MCF 10A (cell line): ENCODE measurements at regions of chr5 and their contacts with region 1.

Region 1: DNA sequence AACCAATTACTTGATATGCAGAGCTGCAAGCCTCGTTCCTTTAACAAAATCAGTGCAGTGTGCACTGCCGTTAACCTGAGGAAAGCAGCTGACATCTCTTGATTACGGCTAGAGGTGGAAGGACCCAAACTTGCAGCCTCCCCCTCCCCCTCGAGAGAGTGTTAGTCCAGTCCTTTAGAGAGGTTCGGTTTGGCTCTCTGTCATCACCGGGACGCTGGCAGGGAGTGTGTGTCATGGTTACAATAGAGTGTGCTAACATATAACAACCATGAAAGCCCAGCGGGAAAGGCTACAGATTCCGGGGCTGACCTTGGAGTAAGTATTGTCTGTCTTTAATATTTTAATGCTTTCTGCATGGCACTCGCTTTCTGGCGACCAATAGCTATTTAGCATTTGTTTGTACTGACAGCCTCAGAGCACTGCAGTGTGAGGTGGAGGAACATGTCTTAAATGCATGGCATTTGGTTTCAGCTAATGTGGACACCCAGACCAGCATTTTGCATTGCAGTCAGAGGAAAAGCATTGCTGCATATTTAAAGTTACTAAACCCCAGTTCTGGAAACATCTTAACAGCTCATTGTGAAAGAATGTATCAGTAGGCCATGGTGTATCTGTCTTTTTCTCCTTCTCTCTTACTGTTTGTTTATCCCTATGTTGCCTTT is 237.5 kb downstream of the CD180 start:
- DNase-seq: peak; percentile 60
- H3K4me3 Mint-ChIP-seq: peak overlapping the region; percentile 74
- H3K27ac Mint-ChIP-seq: peak overlapping the region; percentile 90
- H3K4me1 Mint-ChIP-seq: peaks cover 34% of the 10 kb centered on the region
- H3K27me3 Mint-ChIP-seq: no peaks in the 10 kb centered on the region
- CTCF ChIP-seq: no peak

Region 2: GRCh38 chr5:66882592-66883227 is 76.4 kb before region 1 on chr5:
- CTCF ChIA-PET with region 1: interaction called, 6 read pairs
- POLR2A ChIA-PET with region 1: interaction called, 11 read pairs
- intact Hi-C with region 1: no loop called
- DNase-seq: peak; percentile 88
- H3K4me3 Mint-ChIP-seq: peak overlapping the region; percentile 9
- H3K27ac Mint-ChIP-seq: peak overlapping the region; percentile 60
- H3K4me1 Mint-ChIP-seq: peaks cover 28% of the 10 kb centered on the region
- H3K27me3 Mint-ChIP-seq: no peaks in the 10 kb centered on the region
- CTCF ChIP-seq: no peak

Region 3: GRCh38 chr5:66891183-66891925 is 67.8 kb before region 1 on chr5:
- CTCF ChIA-PET with region 1: no interaction called
- POLR2A ChIA-PET with region 1: interaction called, 22 read pairs
- intact Hi-C with region 1: no loop called
- DNase-seq: peak; percentile 95
- H3K4me3 Mint-ChIP-seq: peak overlapping the region; percentile 32
- H3K27ac Mint-ChIP-seq: peak overlapping the region; percentile 100
- H3K4me1 Mint-ChIP-seq: peaks cover 42% of the 10 kb centered on the region
- H3K27me3 Mint-ChIP-seq: no peaks in the 10 kb centered on the region
- CTCF ChIP-seq: no peak

Region 4: DNA sequence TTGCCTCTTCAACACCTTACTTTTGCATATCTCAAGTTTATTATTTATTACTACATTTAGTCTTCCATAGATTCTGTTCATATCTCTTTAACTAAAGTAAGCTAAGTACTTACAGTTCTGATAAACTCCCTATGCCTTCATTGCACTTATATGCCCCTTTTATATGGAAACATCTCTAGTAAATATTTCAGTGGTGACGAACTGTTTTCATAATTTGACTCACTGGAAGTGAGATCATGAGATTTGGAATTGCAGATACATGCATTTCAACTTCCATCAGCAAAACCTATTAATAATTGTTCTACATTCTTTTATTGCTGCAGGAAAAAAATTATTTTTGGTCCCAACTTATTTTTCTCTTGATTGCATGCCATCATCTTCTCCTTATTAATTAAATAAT is 26.0 kb before region 1 on chr5:
- CTCF ChIA-PET with region 1: no interaction called
- POLR2A ChIA-PET with region 1: interaction called, 18 read pairs
- intact Hi-C with region 1: no loop called
- DNase-seq: peak; percentile 8
- H3K4me3 Mint-ChIP-seq: no peak overlapping the region
- H3K27ac Mint-ChIP-seq: no peak overlapping the region
- H3K4me1 Mint-ChIP-seq: peaks cover 10% of the 10 kb centered on the region
- H3K27me3 Mint-ChIP-seq: no peaks in the 10 kb centered on the region
- CTCF ChIP-seq: no peak

Region 5: GRCh38 chr5:66945389-66946349 is 13.4 kb before region 1 on chr5:
- CTCF ChIA-PET with region 1: no interaction called
- POLR2A ChIA-PET with region 1: interaction called, 29 read pairs
- intact Hi-C with region 1: no loop called
- DNase-seq: peak; percentile 13
- H3K4me3 Mint-ChIP-seq: no peak overlapping the region
- H3K27ac Mint-ChIP-seq: no peak overlapping the region
- H3K4me1 Mint-ChIP-seq: no peaks in the 10 kb centered on the region
- H3K27me3 Mint-ChIP-seq: no peaks in the 10 kb centered on the region
- CTCF ChIP-seq: no peak

Region 6: DNA sequence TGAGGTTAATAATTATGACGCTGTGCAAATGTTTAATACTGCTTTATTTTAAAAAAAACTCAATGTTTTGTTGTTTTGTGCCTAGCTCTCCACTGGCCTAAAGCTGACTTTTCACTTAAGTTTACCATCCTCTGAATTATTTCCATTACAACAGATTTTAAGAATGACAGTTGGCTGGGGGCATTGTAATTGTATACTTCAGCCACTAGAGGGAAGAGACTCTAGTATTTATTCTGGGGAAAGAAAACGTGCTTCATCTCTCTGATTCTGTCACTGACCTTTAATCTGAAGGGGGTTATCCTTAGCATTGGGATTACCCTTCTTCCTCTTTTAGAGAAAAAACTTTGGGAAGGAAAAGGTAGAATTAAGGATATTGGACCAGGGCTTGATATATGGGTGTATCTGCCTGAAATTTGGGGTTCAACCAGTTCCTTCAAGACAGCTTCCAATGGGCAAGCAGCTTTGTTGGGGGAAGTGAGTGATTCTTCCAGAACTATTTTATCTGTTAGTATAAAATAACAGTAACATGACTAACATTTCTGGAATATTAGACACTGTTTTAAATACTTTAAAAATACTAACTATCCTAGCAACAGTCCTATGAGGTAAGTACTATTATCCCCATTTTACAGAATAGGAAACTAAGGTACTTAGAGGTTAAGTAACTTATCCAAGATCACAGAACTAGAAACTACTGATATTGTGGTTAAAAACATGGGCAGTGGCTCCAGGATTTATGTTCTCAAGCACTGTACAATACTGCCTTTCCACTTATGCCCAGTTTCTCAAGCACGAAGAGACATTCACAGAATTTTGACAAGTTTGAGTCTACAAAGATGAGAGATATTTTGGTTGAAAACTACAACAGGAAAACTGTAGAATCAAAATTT is 29.1 kb after region 1 on chr5:
- CTCF ChIA-PET with region 1: interaction called, 10 read pairs
- POLR2A ChIA-PET with region 1: interaction called, 5 read pairs
- intact Hi-C with region 1: no loop called
- DNase-seq: peak; percentile 48
- H3K4me3 Mint-ChIP-seq: no peak overlapping the region
- H3K27ac Mint-ChIP-seq: no peak overlapping the region
- H3K4me1 Mint-ChIP-seq: peaks cover 5% of the 10 kb centered on the region
- H3K27me3 Mint-ChIP-seq: no peaks in the 10 kb centered on the region
- CTCF ChIP-seq: peak; percentile 54